ENCODE measurements at regions of chr9 and their contacts with region 1.

Region 1: GRCh38 chr9:137423004-137423874 is at the starts of genes EXD3 and NOXA1:
- DNase-seq: peak; percentile 96
- H3K4me3 Mint-ChIP-seq: peak within 1 kb of the TSS; percentile 83
- H3K27ac Mint-ChIP-seq: peak within 1 kb of the TSS; percentile 71
- H3K4me1 Mint-ChIP-seq: peaks cover 8% of the 10 kb centered on the region
- H3K27me3 Mint-ChIP-seq: no peaks in the 10 kb centered on the region
- total RNA-seq, gene EXD3: 13.5 to 13.6 TPM
- total RNA-seq, gene NOXA1: 1.1 TPM

Region 2: GRCh38 chr9:137397675-137398423 is 25.4 kb before region 1 on chr9:
- CTCF ChIA-PET with region 1: interaction called, 10 read pairs
- POLR2A ChIA-PET with region 1: interaction called, 3 read pairs
- intact Hi-C with region 1: no loop called
- DNase-seq: peak; percentile 76
- H3K4me3 Mint-ChIP-seq: peak overlapping the region; percentile 33
- H3K27ac Mint-ChIP-seq: peak overlapping the region; percentile 67
- H3K4me1 Mint-ChIP-seq: peaks cover 27% of the 10 kb centered on the region
- H3K27me3 Mint-ChIP-seq: peaks cover 3% of the 10 kb centered on the region

Region 3: GRCh38 chr9:137445275-137445807 is 22.1 kb after region 1 on chr9:
- CTCF ChIA-PET with region 1: interaction called, 15 read pairs
- POLR2A ChIA-PET with region 1: no interaction called
- intact Hi-C with region 1: loop called (anchors 2 kb)
- DNase-seq: peak; percentile 90
- H3K4me3 Mint-ChIP-seq: no peak overlapping the region
- H3K27ac Mint-ChIP-seq: no peak overlapping the region
- H3K4me1 Mint-ChIP-seq: peaks cover 13% of the 10 kb centered on the region
- H3K27me3 Mint-ChIP-seq: peaks cover 4% of the 10 kb centered on the region

Region 4: GRCh38 chr9:137459147-137459600 is 35.9 kb after region 1 on chr9 and contains the start of gene NSMF:
- CTCF ChIA-PET with region 1: interaction called, 5 read pairs
- POLR2A ChIA-PET with region 1: interaction called, 4 read pairs
- intact Hi-C with region 1: loop called (anchors 2 kb)
- DNase-seq: peak; percentile 95
- H3K4me3 Mint-ChIP-seq: peak within 1 kb of the TSS; percentile 39
- H3K27ac Mint-ChIP-seq: peak within 1 kb of the TSS; percentile 38
- H3K4me1 Mint-ChIP-seq: peaks cover 23% of the 10 kb centered on the region
- H3K27me3 Mint-ChIP-seq: no peaks in the 10 kb centered on the region
- total RNA-seq, gene NSMF: 29.9 to 31.6 TPM